ENCODE measurements at regions of chr1 and their contacts with region 1.

Region 1: GRCh38 chr1:212558693-212559480 is 49.7 kb upstream of the ATF3 start:
- DNase-seq: peak; percentile 93
- ATAC-seq: peak; percentile 87
- H3K4me3 ChIP-seq: peak overlapping the region; percentile 56
- H3K27ac ChIP-seq: peak overlapping the region; percentile 73
- H3K4me1 ChIP-seq: peaks cover 9% of the 10 kb centered on the region
- H3K27me3 ChIP-seq: no peaks in the 10 kb centered on the region
- CTCF ChIP-seq: 0 out of 2 replicates have a peak, but pooled peaks have one; percentile 3
- POLR2A ChIP-seq: peak; percentile 63; the same call in 1 of the 2 replicates
- RAD21 ChIP-seq: peak; percentile 8; the same call in 1 of the 2 replicates

Region 2: DNA sequence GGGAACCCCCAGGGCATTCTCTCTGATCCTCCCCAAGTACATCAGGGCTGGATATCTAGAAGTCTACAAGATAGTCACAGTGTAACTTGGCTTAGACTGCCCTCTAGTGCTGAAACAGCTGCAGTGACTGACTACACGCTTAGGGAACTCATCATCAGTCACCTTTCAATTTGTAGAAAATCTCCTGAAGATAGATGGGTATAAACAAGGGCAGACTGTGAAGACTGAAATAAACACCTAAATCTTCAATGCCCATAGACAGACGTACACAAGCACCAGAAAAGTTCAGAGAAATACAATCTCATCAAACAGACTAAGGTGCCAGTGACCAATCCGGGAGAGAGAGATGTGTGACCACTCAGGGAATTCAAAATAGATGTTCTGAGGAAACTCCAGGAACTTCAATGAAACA is 190.8 kb before region 1 on chr1:
- CTCF ChIA-PET with region 1: no interaction called
- POLR2A ChIA-PET with region 1: no interaction called
- dilution Hi-C with region 1: no loop called
- in situ Hi-C with region 1: no loop called
- intact Hi-C with region 1: no loop called
- DNase-seq: peak; percentile 81
- ATAC-seq: peak; percentile 98
- H3K4me3 ChIP-seq: no peak overlapping the region
- H3K27ac ChIP-seq: no peak overlapping the region
- H3K4me1 ChIP-seq: no peaks in the 10 kb centered on the region
- H3K27me3 ChIP-seq: no peaks in the 10 kb centered on the region
- CTCF ChIP-seq: peak; percentile 88
- POLR2A ChIP-seq: no peak
- RAD21 ChIP-seq: peak; percentile 93

Region 3: GRCh38 chr1:212520746-212521145 is 38.1 kb before region 1 on chr1:
- CTCF ChIA-PET with region 1: no interaction called
- POLR2A ChIA-PET with region 1: no interaction called
- dilution Hi-C with region 1: no loop called
- in situ Hi-C with region 1: no loop called
- intact Hi-C with region 1: loop called (anchors 5 kb)
- DNase-seq: no peak
- ATAC-seq: no peak
- H3K4me3 ChIP-seq: no peak overlapping the region
- H3K27ac ChIP-seq: no peak overlapping the region
- H3K4me1 ChIP-seq: peaks cover 4% of the 10 kb centered on the region
- H3K27me3 ChIP-seq: no peaks in the 10 kb centered on the region
- CTCF ChIP-seq: no peak
- POLR2A ChIP-seq: no peak
- RAD21 ChIP-seq: no peak

Region 4: DNA sequence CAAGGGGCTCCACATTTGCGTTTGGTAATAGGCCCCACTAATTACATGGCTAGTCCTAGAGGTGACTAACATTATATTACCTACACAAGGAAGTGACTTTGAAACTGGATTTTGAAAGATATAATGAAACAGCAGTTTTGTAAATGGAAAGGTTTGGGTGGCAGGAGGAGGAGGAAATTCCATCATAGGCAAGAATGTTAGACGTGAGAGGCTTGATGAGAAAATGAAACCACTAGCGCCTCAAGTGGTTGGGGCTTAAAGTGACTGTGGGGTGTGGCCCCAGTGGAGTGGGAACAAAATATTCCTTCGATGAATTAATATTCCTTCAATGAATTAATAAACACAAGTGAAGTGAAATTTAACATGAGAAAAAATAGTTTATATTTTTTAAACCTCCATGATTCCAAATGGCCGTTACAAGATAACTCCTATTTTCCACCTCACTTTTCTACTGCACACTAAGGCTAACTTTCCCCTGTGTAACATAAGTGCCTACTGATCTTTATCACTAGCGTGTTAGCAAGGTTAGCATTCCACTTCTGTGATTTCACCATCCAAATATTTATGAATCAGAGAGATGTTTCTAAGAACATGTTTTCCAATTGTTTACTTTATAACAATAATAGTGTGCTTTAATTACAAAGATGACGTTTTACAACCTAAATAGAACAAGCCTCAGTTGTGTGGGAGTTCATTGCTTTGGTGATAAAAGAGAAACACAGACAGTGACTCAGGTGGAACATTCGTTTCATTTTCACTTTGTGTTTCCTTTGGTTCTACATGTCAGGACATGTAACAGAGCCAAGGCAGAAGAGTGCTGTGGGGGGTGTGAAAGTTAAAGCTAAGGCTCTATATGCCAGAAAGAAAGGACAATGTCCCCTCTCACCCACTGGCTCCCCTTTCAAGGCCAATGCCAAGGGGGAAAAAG is 37.2 kb after region 1 on chr1:
- CTCF ChIA-PET with region 1: no interaction called
- POLR2A ChIA-PET with region 1: no interaction called
- dilution Hi-C with region 1: no loop called
- in situ Hi-C with region 1: no loop called
- intact Hi-C with region 1: loop called (anchors 1 kb)
- DNase-seq: peak; percentile 99
- ATAC-seq: peak; percentile 90
- H3K4me3 ChIP-seq: peak overlapping the region; percentile 31; the same call in 1 of the 2 replicates
- H3K27ac ChIP-seq: peak overlapping the region; percentile 98
- H3K4me1 ChIP-seq: peaks cover 10% of the 10 kb centered on the region
- H3K27me3 ChIP-seq: peaks cover 9% of the 10 kb centered on the region
- CTCF ChIP-seq: peak; percentile 75
- POLR2A ChIP-seq: peak; percentile 14; the same call in 1 of the 2 replicates
- RAD21 ChIP-seq: peak; percentile 68

Measured in IMR-90 (cell line).